ENCODE measurements at regions of chr6 and their contacts with region 1.

Region 1: DNA sequence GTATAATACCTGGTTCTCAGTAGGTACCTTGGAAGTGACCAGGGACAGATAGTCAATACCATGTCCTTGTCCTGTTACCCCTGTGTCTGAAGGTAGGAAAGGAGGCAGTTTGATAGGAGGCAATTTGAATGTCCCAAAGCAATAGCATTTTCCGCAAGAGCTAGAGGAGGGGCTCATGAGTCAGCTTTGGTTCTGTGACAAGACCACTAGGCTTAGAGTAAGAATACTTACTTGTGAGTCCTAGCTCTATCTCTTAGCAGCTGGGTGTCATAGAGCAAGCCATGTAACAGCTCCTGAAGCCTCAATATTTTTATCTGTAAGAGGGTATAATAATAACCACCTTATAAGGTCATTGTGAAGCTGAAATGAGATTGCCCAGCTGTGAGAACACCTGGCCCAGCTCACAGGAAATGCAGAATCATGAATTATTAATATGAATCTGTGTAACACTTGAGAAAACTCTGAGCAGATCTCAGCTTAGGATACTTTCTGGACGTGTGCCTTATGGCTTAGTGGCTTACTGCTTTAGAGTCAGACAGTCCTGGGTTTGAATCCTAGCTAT is 58.6 kb downstream of the DAAM2 start:
- DNase-seq: peak; percentile 90
- H3K4me3 ChIP-seq: peak overlapping the region; percentile 48
- H3K27ac ChIP-seq: peak overlapping the region; percentile 87
- H3K4me1 ChIP-seq: peaks cover 49% of the 10 kb centered on the region
- CTCF ChIP-seq: no peak

Region 2: GRCh38 chr6:39724787-39725631 is 125.8 kb before region 1 on chr6 and contains the start of gene KIF6:
- CTCF ChIA-PET with region 1: no interaction called
- POLR2A ChIA-PET with region 1: no interaction called
- intact Hi-C with region 1: no loop called
- DNase-seq: peak; percentile 84
- H3K4me3 ChIP-seq: peak within 1 kb of the TSS; percentile 70
- H3K27ac ChIP-seq: no peak within 1 kb of the TSS
- H3K4me1 ChIP-seq: no peaks in the 10 kb centered on the region
- CTCF ChIP-seq: no peak
- total RNA-seq, gene KIF6: not detected in 2 replicates

Region 3: GRCh38 chr6:39812853-39813533 is 37.8 kb before region 1 on chr6:
- CTCF ChIA-PET with region 1: interaction called, 8 read pairs
- POLR2A ChIA-PET with region 1: interaction called, 39 read pairs
- intact Hi-C with region 1: loop called (anchors 2 kb)
- DNase-seq: peak; percentile 92
- H3K4me3 ChIP-seq: peak overlapping the region; percentile 28
- H3K27ac ChIP-seq: peak overlapping the region; percentile 65
- H3K4me1 ChIP-seq: peaks cover 65% of the 10 kb centered on the region
- CTCF ChIP-seq: peak; percentile 79